ENCODE measurements at regions of chr17 and their contacts with region 1.

Region 1: DNA sequence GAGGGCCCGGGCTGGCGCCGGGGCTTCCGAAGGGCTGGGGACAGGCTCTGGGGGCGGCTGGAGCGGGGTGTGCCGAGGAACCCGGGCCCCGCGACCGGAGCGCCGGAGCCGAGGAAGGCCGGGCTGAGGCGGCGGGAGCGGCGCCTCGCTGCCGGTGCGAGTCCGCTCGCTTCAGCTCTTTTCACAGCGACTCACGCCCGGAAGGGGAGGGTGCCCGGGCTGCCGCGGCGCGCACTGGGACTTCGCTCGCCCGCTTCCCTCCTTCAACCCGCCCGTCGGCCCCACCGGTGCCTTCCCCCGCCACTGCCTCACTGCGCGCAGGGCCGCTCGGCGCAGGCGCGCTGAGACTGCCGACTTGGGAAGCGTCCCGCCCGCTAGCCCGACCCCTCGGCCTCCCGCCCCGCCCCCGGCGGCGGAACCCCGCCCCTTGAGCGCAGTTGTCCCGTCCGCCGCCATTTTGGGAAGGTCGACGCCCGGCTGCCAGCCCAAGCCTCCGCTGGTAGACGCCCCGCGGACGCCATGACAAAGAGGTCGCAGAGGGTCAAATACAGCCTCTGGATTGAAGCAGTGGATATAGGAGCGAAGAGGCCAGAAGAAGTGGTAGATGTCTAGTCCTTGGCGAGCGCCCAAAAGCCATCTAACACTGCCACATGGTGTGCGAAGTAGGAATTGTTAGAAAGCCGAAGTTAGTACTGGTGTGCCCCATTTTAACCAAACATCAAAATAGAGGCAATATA is at the start of gene UBE2G1:
- H3K4me3 Mint-ChIP-seq: peak within 1 kb of the TSS; percentile 82
- H3K27ac Mint-ChIP-seq: peak within 1 kb of the TSS; percentile 93
- H3K4me1 Mint-ChIP-seq: peaks cover 22% of the 10 kb centered on the region
- H3K27me3 Mint-ChIP-seq: no peaks in the 10 kb centered on the region

Region 2: DNA sequence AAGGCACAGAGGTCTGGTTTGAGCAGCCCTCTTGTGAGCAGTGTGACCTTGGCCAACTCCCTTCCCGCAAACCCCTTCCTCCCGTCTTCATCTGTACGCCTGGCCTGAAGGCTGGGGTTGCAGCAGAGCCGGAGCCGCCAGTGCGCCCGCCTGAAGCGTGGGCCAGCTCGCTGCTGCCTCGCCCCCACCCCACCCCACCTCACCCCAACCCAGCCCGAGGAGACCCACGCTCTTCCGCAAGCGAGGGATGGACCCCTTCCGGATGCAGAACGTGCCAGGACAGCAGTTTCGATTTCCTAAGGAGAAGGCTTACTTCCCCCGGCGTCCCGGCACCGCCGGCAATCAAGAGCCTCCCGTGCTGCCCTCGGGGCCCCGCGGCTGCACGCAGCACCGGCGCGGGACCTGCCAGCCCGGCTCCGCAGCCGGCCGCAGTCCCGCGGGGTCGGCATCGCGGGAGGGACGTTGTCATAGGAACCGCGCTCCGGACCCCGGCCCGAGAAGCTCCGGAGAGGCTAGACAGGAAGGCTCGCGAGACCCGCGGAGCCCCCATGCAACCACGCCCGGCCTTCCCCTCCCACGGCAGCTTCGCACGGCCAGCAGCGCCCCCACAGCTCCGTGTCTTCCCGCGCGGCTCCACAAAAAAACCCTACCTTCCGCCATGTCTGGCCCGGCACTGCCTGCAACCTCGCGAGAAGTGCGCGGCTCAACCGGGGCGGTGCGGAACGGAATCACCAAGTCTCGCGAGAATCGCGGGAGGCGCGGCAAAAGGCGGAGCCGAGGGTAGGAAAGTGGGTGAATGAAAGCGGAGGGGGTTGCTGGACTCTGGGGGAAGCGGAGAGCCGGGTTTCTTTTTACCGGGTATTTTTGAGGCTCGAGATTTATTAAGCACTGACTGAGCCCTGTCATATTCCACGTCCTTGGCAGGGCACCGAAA is 102.9 kb before region 1 on chr17 and contains the start of gene ANKFY1:
- intact Hi-C with region 1: loop called (anchors 5 kb)
- H3K4me3 Mint-ChIP-seq: peak within 1 kb of the TSS; percentile 83
- H3K27ac Mint-ChIP-seq: peak within 1 kb of the TSS; percentile 84
- H3K4me1 Mint-ChIP-seq: peaks cover 28% of the 10 kb centered on the region
- H3K27me3 Mint-ChIP-seq: no peaks in the 10 kb centered on the region

Region 3: DNA sequence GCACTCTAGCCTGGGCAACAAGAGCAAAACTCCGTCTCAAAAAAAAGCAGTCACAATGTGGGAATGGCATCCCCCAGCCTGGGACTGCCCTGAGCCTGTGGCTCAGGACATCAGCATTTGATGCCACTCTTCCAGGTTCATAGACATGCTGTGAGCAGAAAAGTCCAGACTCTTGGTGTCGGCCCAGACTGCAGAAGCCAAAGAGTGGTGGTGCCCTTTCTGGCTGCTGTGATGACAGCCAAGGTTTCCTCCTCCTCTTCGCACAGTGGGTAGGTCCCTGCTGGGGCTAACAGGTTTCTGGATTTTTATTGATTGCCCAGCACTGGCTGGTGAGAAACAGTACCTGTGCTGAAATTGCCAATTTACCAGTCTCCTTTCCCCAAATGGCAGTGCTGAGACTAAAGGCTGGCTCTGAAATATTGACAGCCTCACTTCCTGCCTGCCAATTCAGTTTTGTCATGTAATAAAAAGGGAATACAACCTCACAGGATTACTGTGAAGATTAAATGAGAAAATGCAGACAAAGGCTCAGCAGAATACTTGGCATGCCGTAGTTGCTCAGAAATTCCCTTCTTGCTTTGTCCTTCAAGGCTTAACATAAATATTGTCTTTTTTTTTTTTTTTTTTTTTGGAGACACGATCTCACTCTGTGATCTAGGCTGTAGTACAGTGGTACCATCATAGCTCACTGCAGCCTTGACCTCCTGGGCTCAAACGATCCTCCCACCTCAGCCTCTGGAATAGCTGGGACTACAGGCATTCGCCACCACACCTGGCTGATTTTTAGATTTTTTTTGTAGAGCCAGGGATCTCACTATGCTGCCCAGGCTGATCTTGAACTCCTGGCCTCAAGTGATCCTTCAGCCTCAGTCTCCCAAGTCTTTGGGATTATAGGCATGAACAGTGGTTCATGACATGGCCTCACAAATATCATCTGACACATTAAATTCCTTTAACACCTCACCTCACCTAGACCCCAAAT is 15.5 kb after region 1 on chr17:
- intact Hi-C with region 1: no loop called
- H3K4me3 Mint-ChIP-seq: no peak overlapping the region
- H3K27ac Mint-ChIP-seq: no peak overlapping the region
- H3K4me1 Mint-ChIP-seq: no peaks in the 10 kb centered on the region
- H3K27me3 Mint-ChIP-seq: peaks cover 22% of the 10 kb centered on the region